Testis (tissue), 5 donors: ENCODE measurements at regions of chr9 and their contacts with region 1.

Region 1: DNA sequence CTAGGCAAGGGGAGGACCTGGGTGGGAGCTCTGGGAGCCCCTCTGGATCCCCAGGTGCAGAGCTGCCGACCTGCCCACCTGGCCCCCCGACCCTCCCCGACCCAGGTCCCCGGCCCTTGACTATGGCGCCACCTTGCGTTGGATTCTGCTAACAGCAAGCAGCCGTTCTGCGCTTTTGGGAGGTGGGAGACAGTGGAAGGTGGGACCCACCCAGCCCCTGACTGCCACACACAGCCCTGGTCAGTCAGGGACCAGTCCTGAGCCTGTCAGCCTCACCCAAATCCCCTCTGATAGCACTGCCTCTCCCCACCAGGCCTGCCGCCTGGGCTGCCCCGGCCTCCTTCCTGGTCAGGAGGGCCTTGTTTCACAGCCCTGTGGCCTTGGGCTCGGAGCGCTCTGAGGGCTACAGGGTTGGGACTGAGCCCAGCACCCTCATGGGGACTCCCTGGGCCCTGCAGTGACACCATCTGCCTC is 77.9 kb downstream of the HMCN2 start:
- DNase-seq: peak; percentile 33
- H3K4me3 ChIP-seq: no peak overlapping the region
- H3K27ac ChIP-seq: no peak overlapping the region
- H3K4me1 ChIP-seq: no peaks in the 10 kb centered on the region
- H3K27me3 ChIP-seq: no peaks in the 10 kb centered on the region
- CTCF ChIP-seq: peak in 2 of 3 experiments; percentile 46 to 82
- POLR2A ChIP-seq: no peak

Region 2: DNA sequence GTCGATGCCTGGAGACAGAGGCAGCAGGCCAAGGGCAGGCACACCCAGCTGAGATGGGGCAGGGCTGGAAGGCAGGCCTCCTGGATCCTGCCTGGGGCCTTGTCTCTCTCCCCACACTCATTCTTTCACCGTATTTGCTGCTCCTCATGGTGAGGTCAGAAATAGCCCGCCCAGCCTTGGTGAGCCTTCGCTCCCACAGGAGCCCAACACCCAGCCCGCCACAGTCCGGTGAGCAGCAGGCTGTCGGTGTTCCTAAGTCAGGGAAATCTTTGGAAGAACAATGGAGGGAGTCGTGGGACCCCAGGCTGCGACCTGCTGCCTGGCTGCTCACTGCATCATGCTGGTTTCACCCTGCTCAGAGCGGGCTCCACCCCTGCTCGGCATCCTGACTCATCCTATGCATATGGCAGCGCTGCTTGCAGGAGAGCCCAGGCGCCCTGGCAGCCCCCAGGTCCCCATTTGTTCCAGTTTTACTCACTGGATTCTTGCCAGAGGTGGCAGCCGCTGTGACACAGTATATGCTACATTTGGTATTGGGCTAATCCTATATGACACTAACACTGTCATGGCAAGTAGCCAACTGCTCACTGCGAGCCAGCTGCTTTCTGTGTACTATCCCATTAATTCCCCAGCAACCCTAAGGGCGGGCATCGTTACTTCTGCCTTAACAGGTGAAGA is 224.5 kb before region 1 on chr9:
- intact Hi-C with region 1: loop called (anchors 10 kb)
- DNase-seq: no peak
- H3K4me3 ChIP-seq: no peak overlapping the region
- H3K27ac ChIP-seq: no peak overlapping the region
- H3K4me1 ChIP-seq: no peaks in the 10 kb centered on the region
- H3K27me3 ChIP-seq: no peaks in the 10 kb centered on the region
- CTCF ChIP-seq: no peak
- POLR2A ChIP-seq: no peak

Region 3: DNA sequence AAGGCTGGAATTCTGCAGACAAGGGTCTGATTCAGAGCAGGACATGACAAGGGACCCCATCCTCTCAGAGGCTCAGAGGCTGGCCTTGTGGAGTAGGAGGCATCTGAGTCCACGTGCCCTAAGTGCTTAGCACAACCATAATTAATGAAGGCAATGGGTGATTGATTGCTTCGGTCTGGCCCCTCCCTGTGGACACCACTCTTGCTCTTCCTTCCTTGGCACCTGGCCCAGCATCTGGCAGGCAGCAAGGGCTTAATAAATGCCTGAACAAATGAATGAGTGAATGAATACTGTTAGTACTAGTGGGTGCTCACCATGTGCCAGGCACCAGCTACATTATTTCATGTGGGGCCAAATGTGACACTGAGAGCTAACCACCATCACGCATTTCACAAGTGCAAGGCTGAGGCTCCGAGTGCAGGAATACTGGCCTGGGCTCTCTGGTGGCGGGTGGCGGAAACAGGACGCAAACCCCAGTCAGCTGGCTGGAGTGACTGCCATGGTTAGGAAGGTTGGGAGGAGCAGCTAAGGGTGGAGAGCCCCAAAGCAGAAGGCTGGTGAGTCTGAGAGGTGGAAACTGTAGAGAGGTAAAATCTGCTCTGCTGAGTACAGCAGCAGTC is 154.9 kb after region 1 on chr9:
- intact Hi-C with region 1: no loop called
- DNase-seq: peak; percentile 32
- H3K4me3 ChIP-seq: no peak overlapping the region
- H3K27ac ChIP-seq: no peak overlapping the region
- H3K4me1 ChIP-seq: no peaks in the 10 kb centered on the region
- H3K27me3 ChIP-seq: no peaks in the 10 kb centered on the region
- CTCF ChIP-seq: no peak
- POLR2A ChIP-seq: no peak